Activated CD4-positive, alpha-beta T cell treated with anti-CD3 and anti-CD28 coated beads, Interleukin-2, amount 10 ng/mL, durations not matched to agents 7 days and 5 days (primary cell): ENCODE measurements at regions of chr17 and their contacts with region 1.

Region 1: GRCh38 chr17:45413498-45413923 is 19.2 kb downstream of the ARHGAP27 start:
- DNase-seq: no peak
- H3K4me3 Mint-ChIP-seq: no peak overlapping the region
- H3K27ac Mint-ChIP-seq: no peak overlapping the region
- H3K4me1 Mint-ChIP-seq: peaks cover 40% of the 10 kb centered on the region
- H3K27me3 Mint-ChIP-seq: no peaks in the 10 kb centered on the region

Region 2: GRCh38 chr17:45351831-45352230 is 61.7 kb before region 1 on chr17:
- CTCF ChIA-PET with region 1: no interaction called
- POLR2A ChIA-PET with region 1: no interaction called
- DNase-seq: no peak
- H3K4me3 Mint-ChIP-seq: no peak overlapping the region
- H3K27ac Mint-ChIP-seq: no peak overlapping the region
- H3K4me1 Mint-ChIP-seq: peaks cover 8% of the 10 kb centered on the region
- H3K27me3 Mint-ChIP-seq: peaks cover 29% of the 10 kb centered on the region

Region 3: GRCh38 chr17:45428050-45428617 is 14.6 kb after region 1 on chr17:
- CTCF ChIA-PET with region 1: interaction called, 11 read pairs
- POLR2A ChIA-PET with region 1: no interaction called
- DNase-seq: peak; percentile 79
- H3K4me3 Mint-ChIP-seq: peak overlapping the region; percentile 45
- H3K27ac Mint-ChIP-seq: peak overlapping the region; percentile 14
- H3K4me1 Mint-ChIP-seq: peaks cover 30% of the 10 kb centered on the region
- H3K27me3 Mint-ChIP-seq: no peaks in the 10 kb centered on the region

Region 4: DNA sequence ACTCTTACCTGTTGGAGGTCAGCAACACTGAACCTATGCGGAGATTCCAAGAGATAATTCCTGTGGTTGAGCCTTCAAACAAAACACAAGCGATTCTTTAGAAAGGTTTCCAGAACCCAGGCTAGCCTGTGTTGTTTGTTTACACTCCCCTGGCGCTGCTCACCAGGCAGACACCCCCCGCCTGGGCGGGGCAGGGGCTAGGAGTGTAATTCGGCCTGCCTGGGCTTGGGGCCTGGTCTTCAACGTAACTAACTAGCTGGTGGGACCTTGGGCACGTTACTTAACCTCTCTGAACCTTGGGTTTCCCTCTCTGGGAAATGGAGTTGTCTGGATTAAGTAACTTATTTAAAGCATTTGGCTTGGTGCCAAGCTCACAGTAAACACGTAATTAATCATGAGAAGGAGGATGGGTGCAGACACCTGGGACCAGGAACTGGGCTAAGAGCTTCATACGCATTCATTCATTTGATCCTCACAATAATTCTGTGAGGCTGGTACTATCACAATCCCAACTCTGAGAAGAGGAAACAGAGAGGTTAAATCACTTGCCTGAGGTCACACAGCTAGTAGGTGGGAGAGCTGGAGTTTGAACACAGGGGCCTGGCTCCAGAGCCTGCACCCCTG is 26.8 kb after region 1 on chr17:
- CTCF ChIA-PET with region 1: no interaction called
- POLR2A ChIA-PET with region 1: no interaction called
- DNase-seq: no peak
- H3K4me3 Mint-ChIP-seq: no peak overlapping the region
- H3K27ac Mint-ChIP-seq: peak overlapping the region; percentile 68
- H3K4me1 Mint-ChIP-seq: peaks cover 26% of the 10 kb centered on the region
- H3K27me3 Mint-ChIP-seq: no peaks in the 10 kb centered on the region